OCI-LY7 (cell line): ENCODE measurements at regions of chr4 and their contacts with region 1.

Region 1: DNA sequence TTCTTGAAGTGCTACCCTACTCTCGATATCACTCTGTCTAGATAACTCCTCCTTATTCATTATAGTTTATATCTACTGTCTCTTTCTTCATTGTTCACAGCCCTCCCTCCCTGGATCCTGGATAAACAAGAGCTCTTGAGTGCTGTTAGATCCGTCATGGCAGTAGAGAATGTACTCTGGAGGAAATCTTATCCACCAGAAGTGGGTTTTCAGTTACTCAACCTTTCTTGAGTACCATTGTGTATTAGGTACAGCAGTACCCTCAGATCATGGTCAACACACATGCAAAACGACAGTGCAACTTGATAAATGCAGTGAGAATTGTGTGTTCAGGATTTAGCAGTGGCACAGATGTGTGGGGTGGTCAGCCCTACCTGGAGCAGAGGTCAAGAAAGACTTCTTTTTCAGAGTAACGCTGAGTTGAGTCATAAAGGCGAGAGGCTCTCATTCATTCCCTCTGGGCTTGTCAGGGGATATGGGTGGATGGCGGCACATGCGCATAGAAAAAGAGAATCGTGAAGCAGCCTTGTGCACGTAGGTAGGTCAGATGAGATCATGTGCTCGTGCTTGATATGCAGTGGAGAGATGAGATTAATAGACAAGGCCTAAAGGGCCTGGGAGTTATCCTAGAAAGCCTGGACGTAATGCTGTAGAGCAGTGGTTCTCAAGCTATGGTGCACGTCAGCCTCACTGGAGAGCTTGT is 89.5 kb downstream of the SNX25 start:
- DNase-seq: no peak
- H3K4me3 ChIP-seq: no peak overlapping the region
- H3K27ac ChIP-seq: no peak overlapping the region
- H3K4me1 ChIP-seq: peaks cover 5% of the 10 kb centered on the region
- CTCF ChIP-seq: no peak

Region 2: GRCh38 chr4:184583738-184584502 is 715.0 kb before region 1 on chr4:
- CTCF ChIA-PET with region 1: no interaction called
- POLR2A ChIA-PET with region 1: no interaction called
- intact Hi-C with region 1: no loop called
- DNase-seq: peak; percentile 11
- H3K4me3 ChIP-seq: no peak overlapping the region
- H3K27ac ChIP-seq: no peak overlapping the region
- H3K4me1 ChIP-seq: peaks cover 5% of the 10 kb centered on the region
- CTCF ChIP-seq: no peak

Region 3: DNA sequence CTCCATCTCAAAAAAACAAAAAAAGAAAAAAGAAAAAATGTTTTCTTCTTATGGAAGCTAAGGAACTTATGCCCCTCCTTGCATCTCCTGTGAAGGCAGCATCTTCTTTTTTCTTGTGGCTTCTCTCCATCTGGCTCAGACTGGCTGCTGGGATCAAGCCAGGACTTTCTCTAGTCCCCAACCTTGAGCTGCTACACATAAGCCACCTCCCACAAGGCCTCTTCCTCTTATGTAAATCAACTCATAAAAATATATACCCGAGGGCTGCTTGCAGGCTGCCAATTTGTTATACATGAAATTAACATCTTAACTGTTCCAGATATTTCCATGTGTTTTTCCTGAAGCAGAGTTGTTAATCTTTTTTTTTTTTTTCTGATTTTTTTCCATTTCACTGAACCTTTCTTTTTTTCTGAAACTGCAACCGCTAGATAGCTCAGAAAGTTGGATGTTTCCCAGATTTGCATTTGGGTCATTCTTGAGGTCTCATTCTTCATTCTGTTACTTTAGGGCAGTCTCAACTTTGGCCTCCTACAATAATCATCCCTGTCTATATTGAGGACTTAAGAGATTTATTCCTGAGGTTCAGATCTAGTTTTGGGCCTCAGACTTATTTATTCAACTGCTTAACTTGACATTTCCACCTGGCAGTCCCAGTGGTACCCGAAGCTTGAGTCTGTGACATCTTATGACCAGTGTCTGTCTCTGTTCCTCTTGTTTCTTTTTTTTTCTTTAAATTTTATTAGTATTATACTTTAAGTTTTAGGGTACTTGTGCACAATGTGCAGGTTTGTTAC is 79.1 kb before region 1 on chr4:
- CTCF ChIA-PET with region 1: no interaction called
- POLR2A ChIA-PET with region 1: no interaction called
- intact Hi-C with region 1: no loop called
- DNase-seq: peak; percentile 65
- H3K4me3 ChIP-seq: peak overlapping the region; percentile 57
- H3K27ac ChIP-seq: peak overlapping the region; percentile 68
- H3K4me1 ChIP-seq: peaks cover 58% of the 10 kb centered on the region
- CTCF ChIP-seq: no peak

Region 4: GRCh38 chr4:185287031-185287430 is 11.8 kb before region 1 on chr4:
- CTCF ChIA-PET with region 1: no interaction called
- POLR2A ChIA-PET with region 1: interaction called, 14 read pairs
- intact Hi-C with region 1: no loop called
- DNase-seq: no peak
- H3K4me3 ChIP-seq: no peak overlapping the region
- H3K27ac ChIP-seq: no peak overlapping the region
- H3K4me1 ChIP-seq: no peaks in the 10 kb centered on the region
- CTCF ChIP-seq: no peak

Region 5: GRCh38 chr4:185323606-185324005 is 24.7 kb after region 1 on chr4:
- CTCF ChIA-PET with region 1: no interaction called
- POLR2A ChIA-PET with region 1: no interaction called
- intact Hi-C with region 1: no loop called
- DNase-seq: no peak
- H3K4me3 ChIP-seq: no peak overlapping the region
- H3K27ac ChIP-seq: no peak overlapping the region
- H3K4me1 ChIP-seq: peaks cover 2% of the 10 kb centered on the region
- CTCF ChIP-seq: no peak

Region 6: GRCh38 chr4:185833055-185833598 is 534.2 kb after region 1 on chr4:
- CTCF ChIA-PET with region 1: no interaction called
- POLR2A ChIA-PET with region 1: no interaction called
- intact Hi-C with region 1: no loop called
- DNase-seq: no peak
- H3K4me3 ChIP-seq: no peak overlapping the region
- H3K27ac ChIP-seq: no peak overlapping the region
- H3K4me1 ChIP-seq: no peaks in the 10 kb centered on the region
- CTCF ChIP-seq: no peak